CD4-positive, alpha-beta memory T cell (primary cell): ENCODE measurements at regions of chr6 and their contacts with region 1.

Region 1: GRCh38 chr6:5866547-5867101 is 140.1 kb downstream of the NRN1 start:
- DNase-seq: peak; percentile 38 to 50 (median 40)
- H3K4me3 ChIP-seq: peak overlapping the region; percentile 59 to 70
- H3K4me3 Mint-ChIP-seq: peak overlapping the region; percentile 76 to 89 (median 87)
- H3K27ac ChIP-seq: peak overlapping the region; percentile 74
- H3K27ac Mint-ChIP-seq: peak overlapping the region; percentile 89 to 99 (median 97)
- H3K4me1 ChIP-seq: peaks cover 48% of the 10 kb centered on the region
- H3K4me1 Mint-ChIP-seq: peaks cover 49 to 64% (median 54%) of the 10 kb centered on the region in 4 donors
- H3K27me3 ChIP-seq: no peaks in the 10 kb centered on the region
- H3K27me3 Mint-ChIP-seq: no peaks in the 10 kb centered on the region

Region 2: GRCh38 chr6:5260661-5261544 is 605.7 kb before region 1 on chr6 and contains the starts of genes FARS2 and LYRM4:
- CTCF ChIA-PET with region 1: no interaction called
- POLR2A ChIA-PET with region 1: interaction called, 3 read pairs
- intact Hi-C with region 1: loop called (anchors 2 kb)
- DNase-seq: peak; percentile 90 to 99 (median 96)
- H3K4me3 ChIP-seq: peak within 1 kb of the TSS; percentile 95 to 96
- H3K4me3 Mint-ChIP-seq: peak within 1 kb of the TSS; percentile 96 to 99 (median 99)
- H3K27ac ChIP-seq: peak within 1 kb of the TSS; percentile 95
- H3K27ac Mint-ChIP-seq: peak within 1 kb of the TSS; percentile 99 to 100 (median 100)
- H3K4me1 ChIP-seq: peaks cover 21% of the 10 kb centered on the region
- H3K4me1 Mint-ChIP-seq: peaks cover 18 to 40% (median 27%) of the 10 kb centered on the region in 4 donors
- H3K27me3 ChIP-seq: no peaks in the 10 kb centered on the region
- H3K27me3 Mint-ChIP-seq: no peaks in the 10 kb centered on the region
- total RNA-seq, gene FARS2: 15.6 to 19.2 TPM
- total RNA-seq, gene LYRM4: 10.6 to 14.3 TPM

Region 3: DNA sequence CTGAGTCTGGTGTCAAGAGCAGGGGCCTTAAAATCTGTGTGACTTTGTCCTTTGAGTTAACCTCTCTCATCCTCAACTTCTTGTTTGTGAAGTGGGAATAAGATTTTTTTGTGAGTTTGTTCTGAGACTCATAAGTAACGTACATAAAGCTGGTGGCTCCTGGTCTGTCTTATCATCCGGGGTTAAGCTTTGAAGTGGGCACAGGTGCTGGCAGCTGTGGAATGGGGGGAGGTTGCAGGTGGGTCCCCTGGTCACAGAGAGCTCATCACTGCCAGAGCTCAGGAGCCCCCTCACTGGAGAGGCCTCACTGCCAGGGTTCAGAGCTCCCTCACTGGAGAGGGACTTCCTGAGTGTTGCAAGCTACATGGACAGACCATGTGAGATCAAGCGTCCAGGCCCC is 34.0 kb before region 1 on chr6:
- CTCF ChIA-PET with region 1: interaction called, 8 read pairs
- POLR2A ChIA-PET with region 1: interaction called, 9 read pairs
- intact Hi-C with region 1: loop called (anchors 5 kb)
- DNase-seq: no peak
- H3K4me3 ChIP-seq: no peak overlapping the region
- H3K4me3 Mint-ChIP-seq: peak overlapping the region in 7 of 8 donors; percentile 55 to 86 (median 74)
- H3K27ac ChIP-seq: peak overlapping the region; percentile 38
- H3K27ac Mint-ChIP-seq: peak overlapping the region; percentile 66 to 94 (median 87)
- H3K4me1 ChIP-seq: peaks cover 38% of the 10 kb centered on the region
- H3K4me1 Mint-ChIP-seq: peaks cover 25 to 48% (median 32%) of the 10 kb centered on the region in 4 donors
- H3K27me3 ChIP-seq: no peaks in the 10 kb centered on the region
- H3K27me3 Mint-ChIP-seq: no peaks in the 10 kb centered on the region

Region 4: DNA sequence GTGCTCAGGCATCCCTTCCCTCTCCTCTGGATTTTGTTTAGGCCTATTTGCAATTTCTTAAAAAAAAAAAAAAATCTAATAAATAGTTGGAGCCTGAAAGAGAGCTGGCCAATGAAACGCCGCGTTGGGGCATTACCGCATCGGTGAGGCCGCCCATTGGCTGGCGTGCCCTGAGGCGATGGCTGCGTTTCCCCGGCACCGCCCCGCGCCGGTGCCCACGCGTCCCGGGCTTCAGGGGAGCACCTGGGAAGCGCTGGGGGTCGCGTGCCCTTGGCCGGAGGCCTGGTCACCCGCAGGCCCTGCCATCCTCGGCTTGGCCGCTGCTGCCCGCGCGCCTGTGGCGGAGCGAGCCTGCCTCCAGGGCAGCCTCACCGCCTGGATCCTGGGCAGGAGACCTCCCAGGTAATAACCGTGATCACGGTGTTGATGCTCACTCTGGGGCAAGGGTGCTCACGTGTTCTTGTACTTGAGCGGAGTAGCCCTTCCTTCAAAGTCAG is 15.3 kb before region 1 on chr6:
- CTCF ChIA-PET with region 1: no interaction called
- POLR2A ChIA-PET with region 1: interaction called, 5 read pairs
- intact Hi-C with region 1: loop called (anchors 1 kb)
- DNase-seq: peak; percentile 65 to 75 (median 71)
- H3K4me3 ChIP-seq: peak overlapping the region; percentile 68 to 69
- H3K4me3 Mint-ChIP-seq: peak overlapping the region; percentile 80 to 92 (median 86)
- H3K27ac ChIP-seq: peak overlapping the region; percentile 56
- H3K27ac Mint-ChIP-seq: peak overlapping the region in 6 of 7 donors; percentile 13 to 92 (median 88)
- H3K4me1 ChIP-seq: peaks cover 15% of the 10 kb centered on the region
- H3K4me1 Mint-ChIP-seq: peaks cover 0 to 13% (median 7%) of the 10 kb centered on the region in 4 donors
- H3K27me3 ChIP-seq: no peaks in the 10 kb centered on the region
- H3K27me3 Mint-ChIP-seq: peaks cover 3% of the 10 kb centered on the region in 2 donors

Region 5: DNA sequence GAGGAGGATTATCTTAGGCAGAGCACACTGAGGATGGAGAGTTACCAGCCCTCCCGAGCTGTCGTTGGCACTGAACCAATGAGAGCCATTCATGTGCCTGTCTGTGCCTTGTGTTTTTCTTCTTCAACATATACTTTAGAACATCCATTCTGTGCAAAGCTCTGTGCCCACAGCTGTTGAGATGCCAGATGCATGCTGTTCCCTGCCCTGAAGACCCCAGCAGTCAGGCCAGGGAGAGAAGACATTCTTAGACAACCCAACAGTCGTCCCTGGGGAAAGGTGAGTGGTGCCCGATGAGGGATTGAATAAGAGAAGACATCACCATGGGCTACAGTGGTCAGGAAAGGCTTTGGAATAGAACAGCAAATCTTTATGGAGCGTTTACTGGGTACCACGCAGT is 26.0 kb after region 1 on chr6:
- CTCF ChIA-PET with region 1: interaction called, 8 read pairs
- POLR2A ChIA-PET with region 1: interaction called, 11 read pairs
- intact Hi-C with region 1: no loop called
- DNase-seq: no peak
- H3K4me3 ChIP-seq: peak overlapping the region in 1 of 2 donors; percentile 24
- H3K4me3 Mint-ChIP-seq: peak overlapping the region in 7 of 8 donors; percentile 90 to 94 (median 92)
- H3K27ac ChIP-seq: no peak overlapping the region
- H3K27ac Mint-ChIP-seq: peak overlapping the region; percentile 12 to 96 (median 90)
- H3K4me1 ChIP-seq: peaks cover 10% of the 10 kb centered on the region
- H3K4me1 Mint-ChIP-seq: peaks cover 2 to 9% (median 7%) of the 10 kb centered on the region in 4 donors
- H3K27me3 ChIP-seq: no peaks in the 10 kb centered on the region
- H3K27me3 Mint-ChIP-seq: no peaks in the 10 kb centered on the region

Region 6: DNA sequence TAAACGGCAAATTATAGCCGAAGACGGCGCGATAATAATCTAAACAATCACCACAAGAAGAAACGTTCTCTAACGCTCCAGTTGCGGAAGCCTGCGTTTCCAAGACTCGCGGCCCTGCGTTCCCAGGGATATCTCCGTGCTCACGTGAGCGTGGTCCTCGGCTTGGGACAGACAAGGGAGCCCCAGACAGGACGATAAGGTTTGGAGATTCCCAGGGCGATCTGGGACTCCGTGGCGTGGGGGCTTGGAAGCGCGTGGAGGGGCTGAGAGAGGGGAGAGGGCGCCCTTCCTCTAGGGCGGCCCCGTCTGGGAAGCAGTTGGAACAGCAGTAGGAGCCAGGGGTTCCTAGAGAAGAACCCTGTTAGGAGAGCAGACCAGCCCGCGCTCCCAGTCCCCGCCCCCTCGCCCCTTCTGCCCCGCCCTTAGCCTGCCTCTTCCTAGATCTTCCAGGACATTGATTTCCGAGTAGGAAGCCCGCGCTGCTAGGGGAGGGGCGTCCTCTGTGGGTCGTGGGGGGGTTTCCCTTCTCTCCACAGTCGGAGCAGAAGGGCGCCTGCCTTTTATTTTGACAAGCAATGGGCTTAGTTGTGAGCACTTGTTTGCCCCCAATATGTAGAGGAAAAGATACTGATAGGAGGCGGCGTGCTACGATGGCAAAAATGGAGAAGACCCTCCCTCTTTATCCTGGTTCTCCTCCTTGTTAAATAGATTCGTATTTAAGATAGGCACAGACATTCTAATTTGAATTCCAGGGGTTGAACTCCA is 129.5 kb after region 1 on chr6:
- CTCF ChIA-PET with region 1: no interaction called
- POLR2A ChIA-PET with region 1: no interaction called
- intact Hi-C with region 1: loop called (anchors 10 kb)
- DNase-seq: peak in 2 of 5 donors; percentile 26 to 50
- H3K4me3 ChIP-seq: peak overlapping the region; percentile 63 to 81
- H3K4me3 Mint-ChIP-seq: peak overlapping the region; percentile 88 to 99 (median 94)
- H3K27ac ChIP-seq: no peak overlapping the region
- H3K27ac Mint-ChIP-seq: peak overlapping the region in 5 of 7 donors; percentile 47 to 79 (median 62)
- H3K4me1 ChIP-seq: peaks cover 55% of the 10 kb centered on the region
- H3K4me1 Mint-ChIP-seq: peaks cover 32 to 72% (median 48%) of the 10 kb centered on the region in 4 donors
- H3K27me3 ChIP-seq: peaks cover 84% of the 10 kb centered on the region
- H3K27me3 Mint-ChIP-seq: peaks cover 71 to 74% of the 10 kb centered on the region in 2 donors